Transverse colon (tissue), 4 donors: ENCODE measurements at regions of chr6 and their contacts with region 1.

Region 1: DNA sequence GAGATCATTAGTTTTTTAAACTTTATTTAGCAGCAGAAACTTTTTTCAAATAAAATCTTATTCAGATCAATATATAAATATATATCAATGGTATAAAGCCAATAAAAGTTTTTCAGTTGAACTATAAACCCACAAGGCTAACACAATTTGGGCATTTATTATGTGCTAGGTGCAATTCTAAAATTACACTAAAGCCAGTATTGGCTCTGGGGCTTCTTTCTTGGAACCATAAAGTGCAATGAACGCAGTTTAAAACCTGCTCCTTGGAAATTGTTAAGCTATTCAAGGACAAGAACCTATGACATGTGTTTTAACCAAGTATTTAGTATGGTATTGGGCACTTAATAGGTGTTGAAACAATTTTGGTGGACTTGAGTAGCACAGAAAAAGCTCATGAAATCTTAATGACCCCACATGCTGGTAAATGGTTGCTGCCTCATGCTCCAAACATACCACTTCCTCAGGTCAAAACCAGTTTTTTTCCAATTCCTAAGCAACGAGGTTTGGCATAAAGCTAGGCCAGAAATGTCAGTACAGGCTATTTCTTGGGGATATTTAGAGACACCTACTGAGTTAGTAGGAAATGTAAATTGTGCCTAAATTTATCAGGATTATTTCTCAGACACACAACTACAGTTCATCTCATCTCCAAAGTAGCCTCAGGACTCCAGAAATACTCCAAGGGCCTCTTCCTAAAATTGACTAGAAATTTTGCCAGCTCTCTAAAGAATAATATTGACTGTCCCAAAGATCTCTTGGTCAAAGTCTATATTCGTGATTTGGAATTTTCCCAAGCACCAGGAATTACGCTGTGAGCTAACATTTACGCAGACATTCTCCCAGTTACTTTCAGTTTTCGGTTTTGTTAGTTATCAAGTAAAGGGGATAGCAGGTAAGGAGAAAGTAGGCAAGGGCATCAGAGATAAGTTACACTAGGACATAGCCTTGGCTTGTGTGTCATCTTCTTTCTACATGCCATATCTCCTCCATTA is 90.9 kb upstream of the LGSN start:
- DNase-seq: no peak
- H3K4me3 ChIP-seq: no peak overlapping the region
- H3K27ac ChIP-seq: peak overlapping the region; percentile 42 to 67 (median 64)
- H3K4me1 ChIP-seq: peaks cover 0 to 17% (median 10%) of the 10 kb centered on the region in 4 donors
- H3K27me3 ChIP-seq: no peaks in the 10 kb centered on the region
- CTCF ChIP-seq: no peak
- EP300 ChIP-seq: no peak
- POLR2A ChIP-seq: no peak

Region 2: GRCh38 chr6:63188828-63189227 is 221.9 kb before region 1 on chr6:
- in situ Hi-C with region 1: no loop called
- intact Hi-C with region 1: no loop called
- DNase-seq: no peak
- H3K4me3 ChIP-seq: no peak overlapping the region
- H3K27ac ChIP-seq: no peak overlapping the region
- H3K4me1 ChIP-seq: no peaks in the 10 kb centered on the region
- H3K27me3 ChIP-seq: no peaks in the 10 kb centered on the region
- CTCF ChIP-seq: no peak
- EP300 ChIP-seq: no peak
- POLR2A ChIP-seq: no peak

Region 3: DNA sequence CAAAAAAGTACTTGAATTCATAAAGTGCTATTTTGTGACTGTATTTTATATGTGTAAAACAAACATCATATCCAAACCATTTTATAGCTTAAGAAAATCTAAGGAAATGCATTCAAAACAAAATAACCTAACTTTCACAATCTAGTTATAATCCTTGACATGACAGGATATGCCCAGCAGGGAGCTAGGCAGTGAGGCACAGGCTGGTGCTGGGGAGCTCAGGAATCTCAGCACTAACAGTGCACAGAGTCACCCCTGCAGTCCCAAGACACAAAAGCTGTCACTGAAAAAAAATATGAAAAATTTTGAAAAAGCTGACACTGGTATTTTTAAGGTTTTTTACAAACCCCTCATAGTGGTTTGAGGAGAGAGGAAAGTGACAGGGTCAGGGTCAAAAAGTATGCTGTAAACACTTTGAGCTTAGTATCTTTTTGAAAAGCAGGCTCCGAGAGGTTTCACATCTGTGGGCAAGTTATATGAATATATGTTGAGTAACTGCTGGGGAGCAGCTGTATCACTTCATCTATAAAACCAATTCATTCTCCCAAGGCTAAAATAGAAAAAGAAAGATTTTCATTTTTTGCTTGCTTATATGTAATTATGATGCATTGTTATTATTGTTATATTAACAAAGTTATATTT is 115.1 kb before region 1 on chr6:
- in situ Hi-C with region 1: no loop called
- intact Hi-C with region 1: no loop called
- DNase-seq: no peak
- H3K4me3 ChIP-seq: no peak overlapping the region
- H3K27ac ChIP-seq: no peak overlapping the region
- H3K4me1 ChIP-seq: no peaks in the 10 kb centered on the region
- H3K27me3 ChIP-seq: no peaks in the 10 kb centered on the region
- CTCF ChIP-seq: no peak
- EP300 ChIP-seq: no peak
- POLR2A ChIP-seq: no peak

Region 4: GRCh38 chr6:63430985-63431519 is 20.3 kb after region 1 on chr6:
- in situ Hi-C with region 1: no loop called
- intact Hi-C with region 1: loop called (anchors 2 kb)
- DNase-seq: no peak
- H3K4me3 ChIP-seq: no peak overlapping the region
- H3K27ac ChIP-seq: no peak overlapping the region
- H3K4me1 ChIP-seq: no peaks in the 10 kb centered on the region
- H3K27me3 ChIP-seq: no peaks in the 10 kb centered on the region
- CTCF ChIP-seq: no peak
- EP300 ChIP-seq: no peak
- POLR2A ChIP-seq: no peak